ENCODE measurements at regions of chr3 and their contacts with region 1.

Region 1: GRCh38 chr3:43317461-43318316 is 31.3 kb downstream of the SNRK start:
- DNase-seq: peak in 1 of 2 donors; percentile 38
- ATAC-seq: peak; percentile 63 to 89 (median 78)
- H3K4me3 ChIP-seq: no peak overlapping the region
- H3K27ac ChIP-seq: peak overlapping the region in 9 of 10 donors; percentile 39 to 85 (median 69)
- H3K4me1 ChIP-seq: peaks cover 0 to 87% (median 73%) of the 10 kb centered on the region in 9 donors
- H3K27me3 ChIP-seq: no peaks in the 10 kb centered on the region
- CTCF ChIP-seq: peak in 4 of 9 donors; percentile 5 to 47 (median 32)

Region 2: DNA sequence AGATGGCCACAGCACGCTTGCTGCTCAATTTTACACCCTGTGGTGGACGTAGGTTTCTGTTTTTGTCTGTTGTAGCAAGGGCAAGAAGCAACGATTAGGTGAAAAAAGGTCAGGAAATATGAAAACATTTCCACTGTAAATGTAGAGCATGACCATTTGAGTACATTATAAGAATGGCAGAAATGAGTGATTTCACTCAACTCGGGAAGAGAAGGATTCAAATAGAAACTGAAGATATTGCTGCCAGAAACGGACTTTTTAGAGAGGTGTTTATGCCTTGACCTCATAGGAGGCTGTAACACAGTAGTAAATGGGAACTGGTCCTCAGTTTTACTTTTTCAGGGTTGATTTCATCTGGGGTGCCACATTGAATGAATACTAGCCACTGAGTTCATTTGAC is 371.6 kb before region 1 on chr3:
- intact Hi-C with region 1: no loop called
- DNase-seq: no peak
- ATAC-seq: no peak
- H3K4me3 ChIP-seq: no peak overlapping the region
- H3K27ac ChIP-seq: no peak overlapping the region
- H3K4me1 ChIP-seq: no peaks in the 10 kb centered on the region
- H3K27me3 ChIP-seq: no peaks in the 10 kb centered on the region
- CTCF ChIP-seq: no peak

Region 3: DNA sequence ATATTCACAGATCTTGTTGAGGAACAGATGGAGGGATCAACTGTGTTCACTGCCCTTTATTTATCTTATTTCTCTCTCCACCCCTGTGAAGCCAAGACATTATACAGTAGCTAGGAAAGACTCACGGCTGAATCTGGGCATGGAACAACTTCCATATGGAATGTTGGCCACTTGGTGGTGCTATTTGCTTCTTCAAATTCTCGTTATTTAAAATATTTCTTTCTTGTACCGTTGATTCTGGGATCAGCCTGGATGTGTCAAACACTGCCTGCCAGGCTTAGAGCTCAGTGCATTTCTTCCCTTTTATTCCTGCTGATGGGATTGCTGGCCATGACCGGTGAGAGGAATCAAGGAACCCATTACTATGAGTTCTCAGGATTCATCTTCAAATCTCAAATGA is 356.1 kb before region 1 on chr3:
- intact Hi-C with region 1: no loop called
- DNase-seq: peak in 1 of 2 donors; percentile 38
- ATAC-seq: peak in 5 of 8 donors; percentile 48 to 67 (median 61)
- H3K4me3 ChIP-seq: no peak overlapping the region
- H3K27ac ChIP-seq: no peak overlapping the region
- H3K4me1 ChIP-seq: no peaks in the 10 kb centered on the region
- H3K27me3 ChIP-seq: no peaks in the 10 kb centered on the region
- CTCF ChIP-seq: peak; percentile 41 to 78 (median 70)

Region 4: GRCh38 chr3:43363621-43364266 is 46.1 kb after region 1 on chr3:
- intact Hi-C with region 1: loop called in 1 of 10 experiments (anchors 1 kb)
- DNase-seq: peak; percentile 75 to 76
- ATAC-seq: peak; percentile 60 to 79 (median 66)
- H3K4me3 ChIP-seq: no peak overlapping the region
- H3K27ac ChIP-seq: peak overlapping the region in 9 of 10 donors; percentile 24 to 79 (median 61)
- H3K4me1 ChIP-seq: peaks cover 3 to 45% (median 15%) of the 10 kb centered on the region in 9 donors
- H3K27me3 ChIP-seq: no peaks in the 10 kb centered on the region
- CTCF ChIP-seq: no peak

Region 5: GRCh38 chr3:43523454-43524053 is 205.9 kb after region 1 on chr3:
- intact Hi-C with region 1: no loop called
- DNase-seq: no peak
- ATAC-seq: no peak
- H3K4me3 ChIP-seq: no peak overlapping the region
- H3K27ac ChIP-seq: no peak overlapping the region
- H3K4me1 ChIP-seq: peaks cover 0 to 5% (median 0%) of the 10 kb centered on the region in 9 donors
- H3K27me3 ChIP-seq: no peaks in the 10 kb centered on the region
- CTCF ChIP-seq: no peak

Measured in heart right ventricle (tissue), 16 donors.